Mucosa of descending colon (tissue), 3 donors: ENCODE measurements at regions of chr21 and their contacts with region 1.

Region 1: DNA sequence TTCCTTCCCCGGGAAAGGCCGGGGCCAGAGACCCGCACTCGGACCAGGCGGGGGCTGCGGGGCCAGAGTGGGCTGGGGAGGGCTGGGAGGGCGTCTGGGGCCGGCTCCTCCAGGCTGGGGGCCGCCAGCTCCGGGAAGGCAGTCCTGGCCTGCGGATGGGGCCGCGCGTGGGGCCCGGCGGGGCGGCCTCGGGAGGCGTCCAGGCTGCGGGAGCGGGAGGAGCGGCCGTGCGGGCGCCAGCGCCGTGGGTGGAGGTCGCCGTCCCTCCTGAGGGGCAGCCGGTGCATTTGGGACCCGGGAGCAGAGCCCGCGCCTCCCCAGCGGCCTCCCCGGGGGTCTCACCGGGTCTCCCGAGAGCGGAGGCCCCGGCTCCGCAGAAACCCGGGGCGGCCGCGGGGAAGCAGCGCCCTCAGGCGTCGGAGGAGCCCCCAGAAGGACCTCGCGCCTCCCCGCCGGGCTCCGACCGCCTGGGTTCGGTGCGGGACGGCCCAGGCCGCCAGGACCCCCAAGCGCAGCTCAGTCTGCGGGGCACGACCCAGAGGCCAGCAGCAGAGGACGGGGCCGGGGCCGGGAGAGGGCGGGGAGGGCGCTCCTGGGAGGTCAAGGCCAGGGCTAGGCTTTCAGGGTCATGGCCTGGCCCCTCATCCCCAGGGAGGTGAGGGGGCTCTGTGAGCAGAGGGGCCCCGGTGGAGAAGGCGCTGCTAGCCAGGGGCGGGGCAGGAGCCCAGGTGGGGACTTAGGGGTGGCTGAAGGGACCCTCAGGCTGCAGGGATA is 7.2 kb upstream of the SLX9 start:
- DNase-seq: peak; percentile 54 to 75 (median 71)
- ATAC-seq: peak; percentile 60
- H3K4me3 ChIP-seq: no peak overlapping the region
- H3K4me1 ChIP-seq: peaks cover 14% of the 10 kb centered on the region
- CTCF ChIP-seq: peak; percentile 27

Region 2: DNA sequence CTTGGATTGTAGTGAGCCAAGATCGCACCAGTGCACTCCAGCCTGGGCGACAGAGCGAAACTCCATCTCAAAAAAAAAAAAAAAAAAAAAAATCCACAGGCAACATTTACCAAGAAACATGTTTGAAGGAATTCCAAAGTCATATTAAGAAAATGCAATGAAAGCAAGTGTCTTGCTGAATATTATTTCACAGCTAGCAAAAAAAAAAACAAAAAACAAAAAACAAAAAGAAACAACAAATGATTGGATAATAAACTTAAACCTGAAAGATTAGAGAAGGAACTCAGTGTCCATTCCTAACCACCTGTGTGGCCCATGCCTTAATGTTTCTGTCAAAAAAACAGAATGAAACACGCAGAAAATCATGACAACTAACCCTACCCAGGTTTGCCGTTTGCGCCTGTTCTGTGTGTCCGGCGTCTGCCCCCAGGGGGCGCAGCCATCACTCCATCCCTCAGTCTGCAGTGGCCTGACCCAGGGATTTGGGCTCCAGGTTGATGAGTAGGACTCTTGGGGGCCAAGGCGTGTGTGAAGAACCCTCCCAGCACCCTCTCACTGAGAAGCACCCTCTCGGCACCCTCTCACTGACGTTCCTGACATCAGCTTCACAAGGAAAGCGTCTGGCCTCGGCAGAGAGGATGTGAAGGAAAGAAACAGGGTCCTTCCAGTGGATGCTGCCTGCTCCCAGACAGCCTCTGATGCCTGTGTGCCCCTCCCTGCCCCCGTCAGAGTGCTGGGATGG is 39.9 kb before region 1 on chr21:
- intact Hi-C with region 1: loop called in 1 of 2 experiments (anchors 5 kb)
- DNase-seq: peak; percentile 68 to 84 (median 83)
- ATAC-seq: peak; percentile 67
- H3K4me3 ChIP-seq: no peak overlapping the region
- H3K4me1 ChIP-seq: peaks cover 8% of the 10 kb centered on the region
- CTCF ChIP-seq: peak; percentile 78

Region 3: GRCh38 chr21:44982558-44983244 is 50.1 kb after region 1 on chr21:
- intact Hi-C with region 1: no loop called
- DNase-seq: peak in 1 of 3 donors; percentile 40
- ATAC-seq: no peak
- H3K4me3 ChIP-seq: no peak overlapping the region
- H3K4me1 ChIP-seq: no peaks in the 10 kb centered on the region
- CTCF ChIP-seq: no peak